ENCODE measurements at regions of chr4 and their contacts with region 1.

Region 1: DNA sequence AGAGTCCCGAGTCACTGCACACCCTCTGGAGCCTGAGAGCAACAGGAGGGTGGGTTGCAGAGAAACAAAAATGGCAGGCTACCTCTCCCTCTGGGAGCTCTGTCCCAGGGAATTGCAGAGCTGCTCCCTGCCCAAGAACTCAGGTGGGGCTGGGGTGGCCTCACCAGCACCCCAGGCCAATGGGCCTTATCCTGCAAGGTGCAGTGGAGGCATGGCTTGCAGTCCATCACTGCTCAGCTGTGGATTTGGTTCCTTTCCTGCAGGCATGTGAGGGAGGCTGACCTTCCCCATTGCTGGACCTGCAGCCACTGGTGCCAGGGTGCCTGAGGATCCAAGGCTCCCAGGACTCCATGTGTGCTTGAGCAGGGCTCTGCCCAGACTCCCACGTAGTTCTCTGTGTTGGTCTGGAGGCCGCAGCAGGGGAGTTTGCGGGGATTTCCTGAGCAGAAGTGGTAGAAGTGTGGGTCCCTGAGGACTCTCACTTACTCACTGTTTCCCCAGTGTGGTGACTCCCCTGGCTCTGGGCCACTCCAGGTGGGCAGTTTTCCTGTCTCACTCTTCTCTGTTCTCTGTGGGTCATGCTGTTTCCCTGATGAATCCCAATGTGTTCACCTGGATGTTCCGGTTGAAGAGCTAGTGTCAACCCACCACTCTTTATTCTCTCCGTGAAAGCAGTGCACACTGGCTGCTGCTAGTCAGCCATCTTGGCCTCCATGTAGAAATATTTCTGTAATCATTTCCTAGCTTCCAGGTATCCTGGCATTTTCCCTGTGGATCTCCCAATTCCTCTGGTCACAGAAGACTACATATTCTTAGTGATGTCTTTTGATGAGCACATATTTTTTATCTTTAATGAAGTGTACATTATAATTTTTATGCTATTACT is 82.3 kb downstream of the ARHGAP24 start:
- DNase-seq: no peak

Region 2: GRCh38 chr4:84530871-84531270 is 1026.4 kb before region 1 on chr4:
- intact Hi-C with region 1: loop called in 1 of 2 experiments (anchors 5 kb)
- DNase-seq: no peak

Region 3: DNA sequence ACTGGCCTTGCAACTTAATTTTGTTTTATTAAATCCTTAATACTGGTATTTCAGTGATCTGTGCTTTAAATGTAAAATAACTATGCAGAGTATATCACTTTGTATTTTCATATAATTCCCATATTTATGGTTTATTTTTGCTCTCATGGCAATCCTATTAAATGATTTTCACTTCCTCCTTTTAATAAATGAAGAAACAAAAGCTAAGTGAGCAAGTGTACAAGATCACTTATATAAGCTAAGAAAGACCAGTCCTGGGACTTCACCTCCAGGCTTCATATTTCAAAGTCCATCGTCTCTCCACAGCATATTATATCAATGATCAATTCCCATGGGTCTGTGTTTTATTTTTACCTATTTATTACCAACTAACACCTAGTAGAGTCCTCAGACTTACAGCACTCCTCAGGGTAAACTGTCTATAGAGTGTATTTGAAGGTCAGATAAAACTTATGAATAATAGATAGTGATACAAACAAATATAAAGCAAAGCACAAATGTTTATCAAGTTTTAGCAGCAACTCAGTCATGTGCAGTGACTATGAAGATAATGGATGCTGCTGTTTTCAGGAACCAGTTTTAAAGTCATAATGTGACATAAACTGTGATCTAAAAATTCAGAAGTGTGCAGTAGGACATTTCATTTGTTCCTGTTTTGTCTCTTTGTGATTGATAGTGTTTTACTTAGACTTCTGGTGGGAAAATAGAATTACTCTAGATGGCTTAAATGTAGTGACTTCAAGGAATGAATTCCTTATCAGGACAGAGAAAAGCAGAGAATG is 25.5 kb before region 1 on chr4:
- intact Hi-C with region 1: no loop called
- DNase-seq: no peak

Measured in posterior vena cava (tissue), 2 donors.